ENCODE measurements at regions of chr10 and their contacts with region 1.

Region 1: DNA sequence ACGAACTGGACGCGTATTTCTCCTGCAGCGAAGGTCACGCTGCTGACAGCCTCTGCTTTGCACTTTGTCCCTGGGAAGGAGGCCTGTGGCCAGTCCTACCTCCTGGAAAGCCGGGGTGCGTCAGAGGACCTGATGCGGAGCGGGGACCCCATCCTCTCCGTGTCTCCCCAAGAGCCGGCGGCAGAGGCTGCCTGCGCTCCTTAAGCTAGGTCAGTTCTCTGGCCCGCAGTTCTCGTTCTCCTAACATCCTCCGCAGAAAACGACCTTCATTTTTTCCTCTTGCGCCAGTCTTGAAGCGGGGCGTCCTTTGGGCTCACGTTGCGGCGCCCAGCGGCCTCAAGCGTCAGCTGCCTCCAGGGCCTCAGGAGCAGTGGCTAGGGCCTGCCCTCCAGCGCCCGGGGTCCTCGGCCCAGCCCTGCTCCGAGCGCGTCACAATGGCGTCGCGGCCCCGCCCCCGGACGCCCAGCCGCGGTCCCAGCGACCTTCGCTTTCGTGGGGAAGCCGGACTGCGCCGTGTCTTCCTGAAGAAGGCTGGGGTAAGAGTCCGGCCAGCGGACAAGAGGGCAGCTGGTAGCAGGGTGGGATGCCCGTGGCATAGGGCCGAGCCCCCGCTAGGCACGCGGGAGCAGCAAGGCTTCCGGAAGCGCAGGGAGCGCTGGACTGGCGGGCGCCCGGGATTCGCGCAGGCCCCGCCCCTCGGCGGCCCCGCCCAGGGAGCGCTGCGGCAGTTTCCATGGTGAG is at the start of gene ZNF487:
- DNase-seq: peak; percentile 91
- H3K4me3 Mint-ChIP-seq: peak within 1 kb of the TSS; percentile 88
- H3K27ac Mint-ChIP-seq: peak within 1 kb of the TSS; percentile 94
- H3K4me1 Mint-ChIP-seq: peaks cover 11% of the 10 kb centered on the region
- H3K27me3 Mint-ChIP-seq: no peaks in the 10 kb centered on the region
- total RNA-seq, gene ZNF487: 1.8 and 2.0 TPM in 2 replicates

Region 2: DNA sequence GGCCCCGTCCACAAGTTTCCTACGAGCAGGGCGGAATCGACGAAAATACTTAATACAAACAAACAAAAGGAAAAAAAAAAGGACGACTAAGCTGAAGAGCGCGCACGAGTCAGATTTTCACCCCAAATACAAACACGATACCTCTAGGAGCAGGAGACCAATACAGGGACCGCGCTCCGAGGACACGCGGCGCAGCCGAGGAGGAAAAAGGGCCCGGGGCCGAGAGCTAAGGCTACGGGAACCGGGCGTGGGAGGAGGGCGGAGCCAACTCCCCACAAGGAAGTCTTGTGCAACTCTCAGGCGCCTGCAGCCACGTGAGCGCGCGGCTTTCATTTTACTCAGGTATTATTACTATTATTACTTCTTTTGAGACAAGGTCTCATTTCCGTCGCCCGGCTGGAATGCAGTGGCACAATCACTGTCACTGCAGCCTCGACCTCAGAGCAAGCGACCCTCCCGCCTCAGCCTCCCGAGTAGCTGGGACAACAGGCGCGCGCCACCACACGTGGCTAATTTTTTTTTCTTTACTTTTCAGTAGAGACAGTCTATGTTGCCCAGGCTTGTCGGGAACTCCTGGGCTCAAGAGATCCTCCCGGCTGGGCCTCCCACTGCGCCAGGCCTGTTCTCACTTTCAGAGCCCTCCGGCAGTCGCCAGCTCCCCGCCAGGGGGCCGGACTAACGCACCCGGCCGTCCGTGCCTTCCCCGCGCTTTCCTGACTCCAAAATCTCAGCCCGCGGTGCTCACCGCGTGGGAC is 28.8 kb before region 1 on chr10:
- intact Hi-C with region 1: loop called (anchors 1 kb)
- DNase-seq: peak; percentile 81
- H3K4me3 Mint-ChIP-seq: peak overlapping the region; percentile 99
- H3K27ac Mint-ChIP-seq: peak overlapping the region; percentile 100
- H3K4me1 Mint-ChIP-seq: peaks cover 42% of the 10 kb centered on the region
- H3K27me3 Mint-ChIP-seq: no peaks in the 10 kb centered on the region

Region 3: GRCh38 chr10:43420369-43421200 is 16.0 kb before region 1 on chr10:
- intact Hi-C with region 1: loop called (anchors 1 kb)
- DNase-seq: peak; percentile 78
- H3K4me3 Mint-ChIP-seq: peak overlapping the region; percentile 85
- H3K27ac Mint-ChIP-seq: peak overlapping the region; percentile 99
- H3K4me1 Mint-ChIP-seq: peaks cover 45% of the 10 kb centered on the region
- H3K27me3 Mint-ChIP-seq: no peaks in the 10 kb centered on the region

Region 4: GRCh38 chr10:43461950-43462349 is 25.4 kb after region 1 on chr10:
- intact Hi-C with region 1: no loop called
- DNase-seq: peak; percentile 33
- H3K4me3 Mint-ChIP-seq: no peak overlapping the region
- H3K27ac Mint-ChIP-seq: no peak overlapping the region
- H3K4me1 Mint-ChIP-seq: peaks cover 21% of the 10 kb centered on the region
- H3K27me3 Mint-ChIP-seq: peaks cover 1% of the 10 kb centered on the region

Region 5: GRCh38 chr10:43524434-43525247 is 88.1 kb after region 1 on chr10:
- intact Hi-C with region 1: no loop called
- DNase-seq: no peak
- H3K4me3 Mint-ChIP-seq: no peak overlapping the region
- H3K27ac Mint-ChIP-seq: no peak overlapping the region
- H3K4me1 Mint-ChIP-seq: no peaks in the 10 kb centered on the region
- H3K27me3 Mint-ChIP-seq: no peaks in the 10 kb centered on the region

Measured in activated T-helper 1 cell treated with anti-CD3 and anti-CD28 coated beads, Interleukin-12 subunit alpha, Interleukin-12 subunit beta, Interleukin-2, Interleukin-4 antibody, amounts not matched to agents 30 ng/mL and 10 ng/mL and 1 ng/mL, durations not matched to agents 14 hours and 24 hours and 36 hours (primary cell).